ENCODE measurements at regions of chr11 and their contacts with region 1.

Region 1: DNA sequence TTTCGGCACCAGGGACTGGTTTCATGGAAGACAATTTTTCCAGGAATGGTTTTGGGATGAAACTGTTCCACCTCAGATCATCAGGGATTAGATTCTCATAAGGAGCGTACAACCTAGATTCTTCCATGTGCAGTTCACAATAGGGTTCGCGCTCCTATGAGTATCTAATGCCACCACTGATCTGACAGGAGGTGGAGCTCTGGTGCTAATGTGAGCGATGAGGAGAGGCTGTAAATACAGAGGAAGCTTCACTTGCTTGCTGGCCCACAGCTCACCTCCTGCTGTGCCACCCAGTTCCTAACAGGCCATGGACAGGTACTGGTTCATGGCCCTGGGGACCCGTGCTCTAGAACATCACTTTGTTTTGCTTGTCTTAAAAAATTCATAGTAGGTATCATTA is 41.8 kb upstream of the AMPD3 start:
- DNase-seq: peak in 1 of 2 donors; percentile 80
- ATAC-seq: peak; percentile 70 to 81 (median 80)
- H3K4me3 ChIP-seq: no peak overlapping the region
- H3K4me3 Mint-ChIP-seq: peak overlapping the region; percentile 83
- H3K27ac ChIP-seq: no peak overlapping the region
- H3K27ac Mint-ChIP-seq: peak overlapping the region in 1 of 2 donors; percentile 47
- H3K4me1 ChIP-seq: peaks cover 44% of the 10 kb centered on the region
- H3K4me1 Mint-ChIP-seq: peaks cover 60 to 66% of the 10 kb centered on the region in 2 donors
- H3K27me3 ChIP-seq: no peaks in the 10 kb centered on the region
- H3K27me3 Mint-ChIP-seq: peaks cover 3 to 13% of the 10 kb centered on the region in 2 donors
- CTCF ChIP-seq: peak; percentile 40

Region 2: GRCh38 chr11:10072142-10072541 is 341.1 kb before region 1 on chr11:
- intact Hi-C with region 1: no loop called
- DNase-seq: no peak
- ATAC-seq: no peak
- H3K4me3 ChIP-seq: no peak overlapping the region
- H3K4me3 Mint-ChIP-seq: no peak overlapping the region
- H3K27ac ChIP-seq: no peak overlapping the region
- H3K27ac Mint-ChIP-seq: no peak overlapping the region
- H3K4me1 ChIP-seq: no peaks in the 10 kb centered on the region
- H3K4me1 Mint-ChIP-seq: peaks cover 2 to 13% of the 10 kb centered on the region in 2 donors
- H3K27me3 ChIP-seq: no peaks in the 10 kb centered on the region
- H3K27me3 Mint-ChIP-seq: no peaks in the 10 kb centered on the region
- CTCF ChIP-seq: no peak

Region 3: GRCh38 chr11:10255388-10256125 is 157.7 kb before region 1 on chr11:
- intact Hi-C with region 1: no loop called
- DNase-seq: no peak
- ATAC-seq: no peak
- H3K4me3 ChIP-seq: no peak overlapping the region
- H3K4me3 Mint-ChIP-seq: no peak overlapping the region
- H3K27ac ChIP-seq: no peak overlapping the region
- H3K27ac Mint-ChIP-seq: no peak overlapping the region
- H3K4me1 ChIP-seq: no peaks in the 10 kb centered on the region
- H3K4me1 Mint-ChIP-seq: peaks cover 0 to 5% of the 10 kb centered on the region in 2 donors
- H3K27me3 ChIP-seq: no peaks in the 10 kb centered on the region
- H3K27me3 Mint-ChIP-seq: no peaks in the 10 kb centered on the region
- CTCF ChIP-seq: no peak

Region 4: GRCh38 chr11:10455637-10456487 is 42.6 kb after region 1 on chr11:
- intact Hi-C with region 1: loop called (anchors 5 kb)
- DNase-seq: peak; percentile 36 to 86
- ATAC-seq: peak; percentile 66 to 73 (median 71)
- H3K4me3 ChIP-seq: peak overlapping the region; percentile 37
- H3K4me3 Mint-ChIP-seq: peak overlapping the region; percentile 86
- H3K27ac ChIP-seq: peak overlapping the region; percentile 48
- H3K27ac Mint-ChIP-seq: peak overlapping the region; percentile 65 to 82
- H3K4me1 ChIP-seq: peaks cover 62% of the 10 kb centered on the region
- H3K4me1 Mint-ChIP-seq: peaks cover 38 to 52% of the 10 kb centered on the region in 2 donors
- H3K27me3 ChIP-seq: no peaks in the 10 kb centered on the region
- H3K27me3 Mint-ChIP-seq: peaks cover 7 to 8% of the 10 kb centered on the region in 2 donors
- CTCF ChIP-seq: no peak

Region 5: DNA sequence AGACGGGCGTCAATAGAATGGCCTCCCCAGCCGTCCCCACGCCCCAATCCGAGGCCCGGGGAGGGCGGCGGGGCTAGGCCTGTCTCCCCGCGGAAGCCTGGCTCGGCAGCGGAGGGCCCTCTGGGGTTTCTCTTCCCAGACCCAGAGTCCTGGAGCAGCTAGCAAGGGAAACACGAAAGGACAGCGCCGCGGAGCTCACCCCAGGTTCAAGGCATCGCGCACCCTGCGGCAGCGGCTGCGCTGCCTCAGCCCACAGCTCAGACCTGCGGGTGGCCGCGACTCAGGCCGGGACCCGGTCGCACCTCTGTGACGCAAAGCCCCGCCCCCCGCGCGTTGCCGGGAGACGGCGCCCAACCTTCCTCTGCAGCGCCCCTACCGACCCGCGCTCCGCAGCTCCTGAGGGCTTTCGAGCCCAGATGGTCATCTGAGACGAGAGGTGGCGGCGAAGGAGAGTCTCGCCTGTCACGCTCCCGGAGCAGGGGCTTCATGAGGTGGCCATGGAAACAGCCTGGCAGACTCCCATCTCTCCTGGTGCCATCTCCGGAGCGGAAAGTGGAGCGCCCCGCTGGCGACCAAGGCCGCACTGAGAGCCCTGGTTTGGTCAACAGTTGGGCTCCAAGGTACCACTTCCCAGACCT is 127.8 kb after region 1 on chr11 and contains the start of gene RNF141:
- intact Hi-C with region 1: loop called (anchors 5 kb)
- DNase-seq: peak; percentile 95 to 98
- ATAC-seq: peak; percentile 97 to 99 (median 98)
- H3K4me3 ChIP-seq: peak within 1 kb of the TSS; percentile 78
- H3K4me3 Mint-ChIP-seq: peak within 1 kb of the TSS; percentile 92
- H3K27ac ChIP-seq: peak within 1 kb of the TSS; percentile 84
- H3K27ac Mint-ChIP-seq: peak within 1 kb of the TSS; percentile 87 to 89
- H3K4me1 ChIP-seq: peaks cover 14% of the 10 kb centered on the region
- H3K4me1 Mint-ChIP-seq: peaks cover 18% of the 10 kb centered on the region in 2 donors
- H3K27me3 ChIP-seq: no peaks in the 10 kb centered on the region
- H3K27me3 Mint-ChIP-seq: peaks cover 2 to 7% of the 10 kb centered on the region in 2 donors
- CTCF ChIP-seq: peak; percentile 88
- total RNA-seq, gene RNF141: 10.3 to 13.9 (median 11.7) TPM

Region 6: DNA sequence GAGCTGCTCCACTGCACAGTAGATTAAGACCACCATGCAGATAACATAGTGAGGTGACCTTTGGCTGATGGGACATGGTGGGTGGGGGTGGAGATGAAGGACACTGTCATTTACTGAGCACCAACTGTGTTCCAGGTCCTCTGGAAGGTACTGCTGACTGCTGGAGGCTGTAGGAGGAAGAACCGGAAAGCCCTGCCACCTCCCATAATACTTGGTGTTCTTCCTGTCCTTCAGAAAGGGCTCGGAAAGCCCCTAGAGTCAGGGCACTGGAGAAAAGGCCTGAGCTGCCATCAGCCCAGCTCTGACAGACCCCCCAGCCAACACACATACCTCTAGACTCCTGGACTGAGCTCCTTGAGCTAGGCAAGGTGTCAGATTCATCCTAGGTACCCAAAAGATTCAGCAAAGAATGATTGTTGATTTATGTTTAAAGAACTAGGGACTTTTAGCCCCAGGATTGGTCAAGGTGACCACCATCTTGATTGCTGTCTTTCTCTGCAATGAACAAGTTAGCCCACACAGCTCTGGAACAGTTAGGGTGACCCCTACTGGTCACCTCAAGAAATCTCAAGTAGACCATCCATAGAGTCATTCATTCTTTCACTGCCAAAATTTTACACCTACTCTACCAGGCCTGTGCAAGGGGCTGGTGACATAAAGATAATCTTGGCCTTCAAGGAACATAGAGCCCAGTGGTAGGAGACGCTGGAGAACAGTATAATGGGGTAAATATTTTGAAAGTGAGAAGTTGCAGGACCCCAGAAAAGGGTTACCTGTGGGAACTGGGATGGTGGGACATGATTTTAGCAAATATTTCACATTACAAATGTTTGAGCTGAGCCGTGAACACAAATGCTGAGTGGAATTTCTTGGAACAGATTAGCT is 240.9 kb after region 1 on chr11:
- intact Hi-C with region 1: loop called (anchors 1 kb)
- DNase-seq: peak in 1 of 2 donors; percentile 80
- ATAC-seq: peak; percentile 82 to 93 (median 83)
- H3K4me3 ChIP-seq: no peak overlapping the region
- H3K4me3 Mint-ChIP-seq: no peak overlapping the region
- H3K27ac ChIP-seq: no peak overlapping the region
- H3K27ac Mint-ChIP-seq: no peak overlapping the region
- H3K4me1 ChIP-seq: peaks cover 14% of the 10 kb centered on the region
- H3K4me1 Mint-ChIP-seq: peaks cover 0 to 3% of the 10 kb centered on the region in 2 donors
- H3K27me3 ChIP-seq: no peaks in the 10 kb centered on the region
- H3K27me3 Mint-ChIP-seq: no peaks in the 10 kb centered on the region
- CTCF ChIP-seq: peak; percentile 86